ENCODE measurements at regions of chr6 and their contacts with region 1.

Region 1: DNA sequence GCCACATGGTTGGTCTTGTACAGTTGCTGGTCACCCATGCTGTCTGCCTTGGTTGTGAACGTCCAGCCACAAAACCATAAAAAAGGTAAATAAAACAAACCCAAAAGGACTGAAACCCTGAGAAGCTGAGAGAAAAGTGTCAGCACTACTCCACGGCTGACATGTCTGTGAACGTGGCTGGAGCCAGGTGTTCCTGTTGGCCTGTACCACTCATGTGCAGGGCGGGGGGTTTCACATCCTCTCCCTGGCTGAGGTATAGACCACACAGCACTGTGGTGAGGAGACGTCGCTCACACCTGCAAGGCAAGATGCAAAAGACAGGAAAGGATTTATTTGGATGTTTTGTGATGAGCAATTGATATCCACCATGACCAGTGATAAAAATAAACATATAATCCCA is 51.9 kb upstream of the MRPS10 start:
- DNase-seq: peak; percentile 93
- H3K4me3 ChIP-seq: no peak overlapping the region
- H3K27ac ChIP-seq: peak overlapping the region; percentile 39
- H3K4me1 ChIP-seq: peaks cover 15% of the 10 kb centered on the region
- CTCF ChIP-seq: 0 out of 2 replicates have a peak, but pooled peaks have one; percentile 7

Region 2: GRCh38 chr6:42075159-42075838 is 194.3 kb before region 1 on chr6:
- CTCF ChIA-PET with region 1: no interaction called
- POLR2A ChIA-PET with region 1: interaction called, 10 read pairs
- intact Hi-C with region 1: no loop called
- DNase-seq: peak; percentile 57
- H3K4me3 ChIP-seq: no peak overlapping the region
- H3K27ac ChIP-seq: no peak overlapping the region
- H3K4me1 ChIP-seq: no peaks in the 10 kb centered on the region
- CTCF ChIP-seq: peak; percentile 89

Region 3: DNA sequence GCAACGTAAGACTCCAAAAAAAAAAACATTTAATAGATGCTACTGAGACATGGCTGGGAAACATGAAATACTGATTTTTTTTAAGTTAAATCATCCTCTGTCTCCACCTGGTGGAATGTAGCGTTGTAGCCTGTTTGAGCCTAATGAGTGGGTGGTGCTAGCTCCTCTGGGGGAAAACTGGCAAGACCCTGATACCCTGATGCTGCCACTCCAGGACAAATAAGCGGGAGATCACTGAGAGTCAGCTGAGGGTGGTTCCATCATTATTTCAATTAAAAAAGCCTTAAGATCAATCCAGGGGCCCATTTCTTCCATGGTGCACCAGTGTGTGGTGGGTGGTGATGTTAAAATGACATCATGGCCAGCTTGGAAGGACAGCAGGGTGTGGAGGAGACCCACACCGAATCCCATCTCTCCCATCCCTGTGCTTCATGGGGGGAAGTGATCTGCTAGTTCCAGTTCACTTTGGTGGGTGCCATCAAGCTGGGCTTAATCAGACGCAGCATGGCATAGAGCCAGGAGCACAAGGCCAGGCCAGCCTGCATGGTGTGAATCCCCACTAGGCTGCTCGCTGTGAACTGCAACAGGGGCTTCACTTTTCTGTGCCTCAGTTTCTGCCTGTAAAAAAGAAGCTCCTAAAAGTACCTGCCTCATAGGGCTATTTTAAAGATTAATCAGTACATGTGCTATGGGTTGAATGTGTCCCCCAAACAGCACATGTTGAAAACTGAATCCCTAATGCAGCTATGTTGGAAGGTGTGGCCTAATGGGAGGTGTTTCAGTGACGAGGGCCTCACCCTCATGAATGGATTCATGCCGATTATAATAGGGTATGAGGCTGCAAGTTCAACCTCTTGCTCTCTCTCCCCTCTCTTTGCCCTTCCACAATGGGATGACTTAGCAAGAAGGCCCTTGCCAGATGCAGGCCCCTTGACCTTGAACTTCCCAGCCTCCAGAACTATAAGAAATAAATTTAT is 38.9 kb before region 1 on chr6:
- CTCF ChIA-PET with region 1: no interaction called
- POLR2A ChIA-PET with region 1: no interaction called
- intact Hi-C with region 1: loop called (anchors 1 kb)
- DNase-seq: peak; percentile 29
- H3K4me3 ChIP-seq: no peak overlapping the region
- H3K27ac ChIP-seq: no peak overlapping the region
- H3K4me1 ChIP-seq: no peaks in the 10 kb centered on the region
- CTCF ChIP-seq: peak; percentile 75